ENCODE measurements at regions of chr1 and their contacts with region 1.

Region 1: DNA sequence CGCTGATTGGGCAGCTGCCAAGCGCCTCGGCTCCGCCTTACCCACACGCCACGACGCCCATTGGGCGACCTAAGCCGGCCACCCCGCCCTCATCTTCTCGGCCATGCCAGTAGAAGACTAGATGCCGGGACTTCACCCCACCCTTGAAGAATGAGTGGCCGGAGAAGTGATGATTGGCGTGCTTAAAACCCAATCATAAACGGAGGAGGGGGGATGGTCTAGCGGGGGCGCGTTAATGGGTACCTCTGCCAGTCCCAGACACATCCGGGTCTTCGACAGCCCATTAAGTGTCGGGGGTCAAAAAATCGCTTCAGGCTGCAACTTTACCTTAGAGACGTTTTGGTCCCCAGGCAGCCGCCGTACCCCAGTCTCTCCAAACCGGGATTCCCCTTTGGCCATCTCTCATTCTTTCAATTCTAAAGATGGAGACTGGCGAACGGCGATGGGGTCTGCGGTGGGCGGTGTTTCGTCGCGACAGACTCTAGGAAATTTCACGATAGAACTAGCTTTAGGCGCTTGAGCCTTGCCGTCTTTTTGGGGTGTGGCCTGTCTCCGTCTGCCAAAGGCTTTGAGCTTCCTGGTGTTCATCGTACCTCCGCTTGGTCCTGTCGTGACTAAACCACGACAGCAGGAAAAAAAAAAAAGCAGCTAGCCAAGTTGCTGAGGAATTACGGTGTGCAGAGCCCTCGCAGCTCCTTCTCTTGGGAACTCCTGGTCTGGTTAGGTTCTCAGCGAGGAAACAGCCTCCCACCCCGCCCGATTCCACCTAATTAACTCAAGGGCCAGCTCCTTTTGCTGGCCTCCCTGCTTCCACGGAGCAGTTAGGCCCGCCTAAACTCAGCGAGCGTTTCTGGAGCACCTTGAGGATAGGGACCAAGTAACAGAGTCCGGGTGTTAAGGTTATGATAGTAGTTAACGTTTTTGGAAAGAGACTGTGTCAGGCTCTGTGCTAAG is at the start of gene GATAD2B:
- DNase-seq: peak; percentile 90
- ATAC-seq: peak; percentile 92
- H3K4me3 Mint-ChIP-seq: peak within 1 kb of the TSS; percentile 95
- H3K27ac Mint-ChIP-seq: peak within 1 kb of the TSS; percentile 95
- H3K4me1 Mint-ChIP-seq: peaks cover 47% of the 10 kb centered on the region
- H3K27me3 Mint-ChIP-seq: no peaks in the 10 kb centered on the region
- CTCF ChIP-seq: no peak
- total RNA-seq, gene GATAD2B: 78.4 and 86.3 TPM in 2 replicates

Region 2: DNA sequence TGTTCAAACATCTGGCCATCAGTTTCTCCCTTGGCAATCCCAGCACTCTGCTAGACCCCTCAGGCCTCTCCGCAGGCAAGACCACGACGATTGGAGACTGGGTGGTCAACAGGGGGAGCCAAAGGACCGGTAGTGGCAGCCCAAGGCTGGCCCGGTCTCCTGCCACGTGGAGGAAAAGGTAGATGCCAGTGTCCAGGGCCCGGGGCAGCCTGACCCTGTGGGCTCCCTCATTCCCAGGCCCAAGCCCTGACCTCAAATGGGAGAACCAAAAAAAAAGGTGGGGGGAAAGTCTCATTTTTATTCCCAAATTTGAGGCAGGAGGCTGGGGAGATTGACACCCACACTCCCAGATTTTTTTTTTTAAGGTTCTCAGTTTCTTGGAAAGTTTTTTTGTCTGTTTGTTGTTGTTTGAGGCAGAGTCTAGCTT is 412.3 kb before region 1 on chr1:
- CTCF ChIA-PET with region 1: no interaction called
- POLR2A ChIA-PET with region 1: no interaction called
- intact Hi-C with region 1: no loop called
- DNase-seq: peak; percentile 67
- ATAC-seq: peak; percentile 97
- H3K4me3 Mint-ChIP-seq: no peak overlapping the region
- H3K27ac Mint-ChIP-seq: no peak overlapping the region
- H3K4me1 Mint-ChIP-seq: peaks cover 4% of the 10 kb centered on the region
- H3K27me3 Mint-ChIP-seq: no peaks in the 10 kb centered on the region
- CTCF ChIP-seq: peak; percentile 81

Region 3: DNA sequence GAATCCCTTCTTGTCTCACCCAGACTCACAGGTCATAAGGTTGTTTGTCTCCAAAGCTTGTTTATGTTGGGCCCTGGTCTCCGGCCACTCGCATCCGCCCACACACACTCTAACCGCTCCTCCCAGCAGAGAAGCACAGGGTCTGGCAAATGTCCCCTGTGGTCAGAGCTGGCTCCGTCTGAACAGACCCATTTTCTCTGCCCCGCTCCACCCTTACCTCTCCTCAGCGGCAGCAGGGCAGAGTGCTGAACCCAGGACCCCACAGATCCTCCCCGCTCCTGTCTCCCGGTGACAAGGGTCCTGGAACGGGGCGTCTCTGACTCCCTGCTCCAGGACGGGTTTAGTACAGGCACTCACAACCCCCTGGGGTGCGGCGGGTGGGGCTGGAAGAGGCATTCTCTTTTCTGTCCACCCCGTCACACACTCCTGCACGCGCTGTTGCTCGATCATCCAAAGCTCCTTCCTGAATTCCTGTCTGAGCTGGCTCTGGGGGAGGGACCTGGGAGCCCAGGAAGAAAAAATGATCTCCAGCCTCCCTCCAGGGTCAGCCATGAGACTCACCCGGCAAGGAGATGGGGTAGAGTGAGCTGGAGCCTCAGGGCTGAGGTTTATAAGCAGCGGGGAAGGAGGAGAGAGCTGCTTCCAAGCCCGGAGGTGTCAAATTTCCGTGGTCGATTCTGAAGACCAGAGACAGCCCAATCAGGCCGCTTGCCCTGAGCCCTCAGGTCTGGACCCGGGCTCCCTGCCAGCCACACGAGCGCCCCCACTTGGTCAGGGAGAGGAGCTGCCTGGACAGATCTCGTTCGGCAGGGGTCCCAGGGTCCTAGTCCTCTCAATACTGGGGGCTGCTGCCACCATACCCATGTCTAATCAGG is 296.1 kb before region 1 on chr1 and contains the start of gene S100A13:
- CTCF ChIA-PET with region 1: no interaction called
- POLR2A ChIA-PET with region 1: no interaction called
- intact Hi-C with region 1: no loop called
- DNase-seq: no peak
- ATAC-seq: peak; percentile 56
- H3K4me3 Mint-ChIP-seq: peak within 1 kb of the TSS; percentile 60
- H3K27ac Mint-ChIP-seq: no peak within 1 kb of the TSS
- H3K4me1 Mint-ChIP-seq: peaks cover 32% of the 10 kb centered on the region
- H3K27me3 Mint-ChIP-seq: no peaks in the 10 kb centered on the region
- CTCF ChIP-seq: no peak
- total RNA-seq, gene S100A13: 16.2 and 17.6 TPM in 2 replicates

Region 4: DNA sequence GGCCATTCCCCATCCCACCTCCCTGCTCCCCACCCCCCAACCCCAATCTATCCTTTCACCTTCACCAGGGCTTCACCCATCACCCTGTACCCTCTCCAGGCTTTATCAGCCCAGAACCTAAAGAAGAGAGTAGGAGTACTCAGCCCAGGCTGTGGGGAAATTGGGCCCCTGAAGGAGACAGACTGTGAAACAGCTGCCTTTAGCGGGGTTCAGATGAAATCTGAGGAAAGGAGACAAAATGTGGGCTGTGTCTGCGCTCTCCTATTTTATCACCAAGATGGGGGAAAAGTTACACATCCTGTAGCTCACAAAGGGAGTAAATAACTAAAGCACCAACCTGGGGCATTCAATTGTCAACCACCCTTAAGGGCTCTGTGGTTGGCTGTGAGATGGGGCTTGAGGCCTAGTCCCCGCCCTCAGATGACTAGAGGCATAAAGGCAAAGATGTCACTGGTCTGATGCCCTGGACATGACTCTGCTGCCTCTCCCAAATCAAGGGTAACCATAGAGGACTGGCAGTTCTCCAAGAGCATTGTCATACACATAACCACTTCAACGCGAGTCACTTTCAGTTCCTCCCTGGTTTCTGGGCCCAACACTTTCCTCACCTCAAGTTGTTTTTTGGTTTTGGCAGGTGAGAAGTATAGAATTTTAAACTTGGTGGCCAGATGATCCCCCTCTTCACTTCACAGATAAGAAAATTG is 118.1 kb before region 1 on chr1:
- CTCF ChIA-PET with region 1: no interaction called
- POLR2A ChIA-PET with region 1: interaction called, 5 read pairs
- intact Hi-C with region 1: loop called (anchors 1 kb)
- DNase-seq: no peak
- ATAC-seq: peak; percentile 98
- H3K4me3 Mint-ChIP-seq: peak overlapping the region; percentile 42
- H3K27ac Mint-ChIP-seq: peak overlapping the region; percentile 83
- H3K4me1 Mint-ChIP-seq: peaks cover 34% of the 10 kb centered on the region
- H3K27me3 Mint-ChIP-seq: no peaks in the 10 kb centered on the region
- CTCF ChIP-seq: no peak

Region 5: DNA sequence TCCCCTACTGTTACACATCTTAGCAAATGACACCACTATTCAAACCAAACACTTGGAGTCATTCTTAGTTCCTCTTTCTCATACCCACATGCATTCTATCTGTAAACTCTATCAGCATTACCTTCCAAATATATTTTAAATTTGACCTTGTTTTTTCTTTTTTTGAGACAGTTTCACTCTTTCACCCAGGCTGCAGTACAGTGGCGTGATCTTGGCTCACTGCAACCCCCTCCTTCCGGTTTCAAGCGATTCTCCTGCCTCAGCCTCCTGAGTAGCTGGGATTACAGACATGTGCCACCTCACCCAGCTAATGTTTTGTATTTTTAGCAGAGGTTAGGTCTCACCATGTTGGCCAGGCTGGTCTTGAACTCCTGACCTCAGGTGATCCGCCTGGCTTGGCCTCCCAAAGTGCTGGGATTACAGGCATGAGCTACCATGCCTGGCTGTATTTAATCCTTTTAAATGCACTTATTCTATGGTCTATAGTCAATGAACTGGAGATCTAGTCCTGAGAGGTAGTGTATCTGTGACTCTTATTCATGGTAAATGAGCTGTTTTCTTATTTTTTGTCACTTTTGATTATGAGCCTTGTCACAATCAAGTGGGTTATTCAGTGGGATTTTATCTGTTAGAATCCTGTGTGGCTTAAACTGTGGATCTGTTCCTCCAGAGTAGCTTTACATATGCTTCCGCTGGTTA is 73.6 kb before region 1 on chr1:
- CTCF ChIA-PET with region 1: no interaction called
- POLR2A ChIA-PET with region 1: interaction called, 12 read pairs
- intact Hi-C with region 1: loop called (anchors 2 kb)
- DNase-seq: no peak
- ATAC-seq: peak; percentile 83
- H3K4me3 Mint-ChIP-seq: peak overlapping the region; percentile 39
- H3K27ac Mint-ChIP-seq: peak overlapping the region; percentile 63
- H3K4me1 Mint-ChIP-seq: peaks cover 62% of the 10 kb centered on the region
- H3K27me3 Mint-ChIP-seq: no peaks in the 10 kb centered on the region
- CTCF ChIP-seq: no peak

Region 6: DNA sequence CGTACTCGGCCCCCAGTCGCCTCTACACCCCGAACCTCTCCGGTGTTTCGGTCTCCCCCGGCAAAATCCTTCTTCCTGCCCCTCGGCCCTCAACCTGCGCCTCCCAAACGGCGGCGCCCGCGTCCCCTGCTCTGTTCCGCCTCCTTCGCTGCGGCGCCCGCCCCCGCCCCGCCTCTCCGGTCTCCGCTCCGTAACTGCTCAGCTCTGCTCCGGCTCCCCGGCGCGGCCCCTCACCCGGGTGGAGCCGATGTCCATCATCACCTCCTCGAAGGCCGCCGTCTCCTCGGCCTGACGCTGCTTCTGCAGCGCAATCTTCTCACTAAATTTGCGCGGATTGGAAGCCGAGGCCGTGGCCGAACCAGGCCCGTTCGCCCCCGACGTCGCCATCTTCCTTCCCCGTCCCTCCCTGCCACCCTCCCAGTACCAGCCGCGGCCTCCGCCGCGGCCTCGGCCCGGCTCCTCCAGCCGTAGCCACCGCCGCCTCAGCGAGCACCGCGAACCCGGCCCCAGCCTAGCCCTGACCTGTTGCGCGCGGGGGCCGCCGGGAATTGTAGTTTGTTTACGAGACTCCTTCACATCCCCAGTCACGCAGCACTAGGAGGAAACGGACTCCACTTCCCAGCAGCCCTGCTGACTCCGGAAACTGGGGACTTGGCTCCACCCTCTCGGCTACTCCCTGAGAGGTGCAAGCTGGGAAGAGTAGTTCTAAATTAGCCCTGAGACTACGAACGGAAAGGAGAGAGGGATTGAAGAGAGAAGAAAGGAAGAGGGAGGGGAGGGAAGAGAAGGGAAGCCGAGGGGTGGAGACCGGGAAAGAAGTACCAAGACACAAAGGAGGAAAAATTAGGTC is 35.1 kb after region 1 on chr1 and contains the start of gene CRTC2:
- CTCF ChIA-PET with region 1: no interaction called
- POLR2A ChIA-PET with region 1: interaction called, 30 read pairs
- intact Hi-C with region 1: loop called (anchors 1 kb)
- DNase-seq: peak; percentile 92
- ATAC-seq: peak; percentile 83
- H3K4me3 Mint-ChIP-seq: peak within 1 kb of the TSS; percentile 96
- H3K27ac Mint-ChIP-seq: peak within 1 kb of the TSS; percentile 96
- H3K4me1 Mint-ChIP-seq: peaks cover 77% of the 10 kb centered on the region
- H3K27me3 Mint-ChIP-seq: no peaks in the 10 kb centered on the region
- CTCF ChIP-seq: no peak
- total RNA-seq, gene CRTC2: 206 and 247 TPM in 2 replicates

Region 7: GRCh38 chr1:154170547-154171222 is 247.4 kb after region 1 on chr1:
- CTCF ChIA-PET with region 1: no interaction called
- POLR2A ChIA-PET with region 1: no interaction called
- intact Hi-C with region 1: no loop called
- DNase-seq: no peak
- ATAC-seq: peak; percentile 40
- H3K4me3 Mint-ChIP-seq: no peak overlapping the region
- H3K27ac Mint-ChIP-seq: peak overlapping the region; percentile 9
- H3K4me1 Mint-ChIP-seq: peaks cover 16% of the 10 kb centered on the region
- H3K27me3 Mint-ChIP-seq: no peaks in the 10 kb centered on the region
- CTCF ChIP-seq: no peak

Region 8: DNA sequence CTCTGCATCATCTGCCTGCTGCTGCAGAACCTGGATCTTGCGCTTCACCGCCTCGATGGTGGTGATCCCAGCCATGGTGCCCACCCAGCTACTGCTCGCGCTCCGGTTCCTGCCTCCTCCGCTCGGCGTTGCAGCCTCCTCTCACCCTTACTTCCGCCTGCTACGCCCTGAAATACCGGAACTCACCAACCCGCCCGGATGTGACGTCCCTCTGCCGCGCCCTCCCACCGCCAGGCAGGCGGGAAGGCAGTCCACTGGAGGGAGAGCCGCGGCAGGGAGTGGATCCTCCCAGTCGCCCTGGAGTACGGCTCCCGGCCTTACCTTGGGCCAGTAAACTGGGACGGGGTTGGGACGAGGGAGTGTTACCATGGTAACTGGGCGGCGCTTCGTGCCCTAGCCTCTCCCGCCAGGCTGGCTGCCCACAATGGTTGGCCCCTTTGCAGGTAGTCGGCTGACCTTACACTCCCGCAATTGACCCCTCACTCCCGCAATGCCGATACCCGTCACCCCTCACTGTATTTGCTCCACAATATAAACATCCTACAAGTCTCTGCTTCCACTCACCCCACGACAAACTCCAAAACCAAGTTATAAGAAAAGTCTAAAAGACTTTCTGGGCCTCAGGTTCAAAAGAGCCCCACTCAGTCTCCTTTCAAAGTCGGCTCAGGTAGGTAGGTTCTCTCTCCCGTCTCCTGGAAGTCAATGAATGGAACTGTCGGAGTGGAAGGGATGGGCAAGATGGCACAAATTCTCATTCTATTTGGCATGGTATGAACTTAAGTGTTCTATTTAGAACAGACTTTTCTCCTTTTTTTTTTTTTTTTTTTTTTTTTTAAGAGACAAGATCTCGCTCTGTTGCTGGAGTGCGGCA is 260.0 kb after region 1 on chr1:
- CTCF ChIA-PET with region 1: no interaction called
- POLR2A ChIA-PET with region 1: interaction called, 7 read pairs
- intact Hi-C with region 1: loop called (anchors 2 kb)
- DNase-seq: peak; percentile 93
- ATAC-seq: peak; percentile 76
- H3K4me3 Mint-ChIP-seq: peak overlapping the region; percentile 100
- H3K27ac Mint-ChIP-seq: peak overlapping the region; percentile 100
- H3K4me1 Mint-ChIP-seq: peaks cover 48% of the 10 kb centered on the region
- H3K27me3 Mint-ChIP-seq: peaks cover 2% of the 10 kb centered on the region
- CTCF ChIP-seq: no peak